PC-9 (cell line): ENCODE measurements at regions of chr2 and their contacts with region 1.

Region 1: GRCh38 chr2:235106874-235107639 is 155.2 kb downstream of the SH3BP4 start:
- DNase-seq: peak; percentile 72 to 78
- H3K4me3 ChIP-seq: no peak overlapping the region
- H3K27ac ChIP-seq: no peak overlapping the region
- H3K4me1 ChIP-seq: peaks cover 9% of the 10 kb centered on the region; the same call in 1 of the 2 replicates
- H3K27me3 ChIP-seq: no peaks in the 10 kb centered on the region
- CTCF ChIP-seq: peak; percentile 91

Region 2: DNA sequence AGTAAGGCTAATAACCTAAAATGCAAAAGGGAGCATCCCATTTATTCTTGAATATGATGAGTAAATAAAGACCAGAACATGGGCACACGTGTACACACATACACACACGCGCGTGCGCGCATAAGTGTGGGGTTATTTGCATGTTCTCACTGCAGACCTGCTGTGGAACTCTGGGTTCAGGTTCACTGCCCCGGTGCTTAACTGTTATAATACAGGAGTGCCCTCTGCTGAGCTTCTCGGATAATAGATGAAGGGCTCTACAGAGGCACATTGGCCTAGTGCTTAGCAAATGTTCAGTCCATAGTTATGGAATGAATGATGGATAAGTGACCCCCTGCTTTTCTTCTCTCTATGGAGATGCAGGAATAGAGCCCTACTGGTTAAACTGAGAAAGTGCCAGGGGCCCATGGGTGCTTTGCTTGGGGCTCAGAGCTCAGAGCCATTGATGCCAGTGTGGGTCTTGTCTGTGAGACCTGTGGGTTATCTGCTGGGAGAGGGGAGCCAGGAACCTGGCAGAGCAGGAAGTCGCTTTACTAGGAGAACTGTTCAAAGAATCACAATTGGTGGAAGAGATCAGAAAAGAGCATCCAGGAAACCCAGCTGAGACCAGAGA is 606.6 kb before region 1 on chr2:
- CTCF ChIA-PET with region 1: interaction called, 6 read pairs
- POLR2A ChIA-PET with region 1: no interaction called
- intact Hi-C with region 1: loop called (anchors 2 kb)
- DNase-seq: peak; percentile 46 to 57
- H3K4me3 ChIP-seq: no peak overlapping the region
- H3K27ac ChIP-seq: no peak overlapping the region
- H3K4me1 ChIP-seq: peaks cover 17% of the 10 kb centered on the region
- H3K27me3 ChIP-seq: no peaks in the 10 kb centered on the region
- CTCF ChIP-seq: peak; percentile 70

Region 3: GRCh38 chr2:234555720-234556119 is 551.3 kb before region 1 on chr2:
- CTCF ChIA-PET with region 1: interaction called, 17 read pairs
- POLR2A ChIA-PET with region 1: no interaction called
- intact Hi-C with region 1: loop called (anchors 1 kb)
- DNase-seq: no peak
- H3K4me3 ChIP-seq: no peak overlapping the region
- H3K27ac ChIP-seq: no peak overlapping the region
- H3K4me1 ChIP-seq: peaks cover 29% of the 10 kb centered on the region
- H3K27me3 ChIP-seq: no peaks in the 10 kb centered on the region
- CTCF ChIP-seq: no peak

Region 4: GRCh38 chr2:234715671-234716250 is 391.3 kb before region 1 on chr2:
- CTCF ChIA-PET with region 1: interaction called, 19 read pairs
- POLR2A ChIA-PET with region 1: interaction called, 4 read pairs
- intact Hi-C with region 1: no loop called
- DNase-seq: no peak
- H3K4me3 ChIP-seq: no peak overlapping the region
- H3K27ac ChIP-seq: no peak overlapping the region
- H3K4me1 ChIP-seq: no peaks in the 10 kb centered on the region
- H3K27me3 ChIP-seq: no peaks in the 10 kb centered on the region
- CTCF ChIP-seq: no peak

Region 5: DNA sequence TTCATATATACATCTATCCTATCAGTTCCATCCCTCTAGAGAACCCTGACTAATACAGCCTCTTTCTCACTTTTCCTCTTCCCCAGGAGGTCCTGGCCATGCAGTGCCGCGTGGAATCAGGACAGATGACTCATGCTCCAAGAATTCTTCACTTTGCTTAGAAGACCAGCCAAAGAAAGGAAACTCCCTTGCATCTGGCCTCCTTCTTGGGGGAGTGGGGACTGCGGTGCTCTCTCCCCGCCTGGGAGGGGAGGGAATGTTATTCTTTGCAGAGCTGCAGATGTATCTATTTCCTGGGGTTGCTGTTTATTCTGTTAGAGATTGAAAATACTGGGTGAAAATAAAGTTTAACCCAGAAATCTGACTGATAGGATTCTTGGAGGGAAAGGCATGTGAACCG is 266.7 kb before region 1 on chr2:
- CTCF ChIA-PET with region 1: no interaction called
- POLR2A ChIA-PET with region 1: no interaction called
- intact Hi-C with region 1: loop called (anchors 1 kb)
- DNase-seq: peak; percentile 86 to 92
- H3K4me3 ChIP-seq: no peak overlapping the region
- H3K27ac ChIP-seq: peak overlapping the region; percentile 63
- H3K4me1 ChIP-seq: peaks cover 38% of the 10 kb centered on the region
- H3K27me3 ChIP-seq: no peaks in the 10 kb centered on the region
- CTCF ChIP-seq: no peak

Region 6: GRCh38 chr2:234951664-234952269 is 155.3 kb before region 1 on chr2 and contains the start of gene SH3BP4:
- CTCF ChIA-PET with region 1: interaction called, 4 read pairs
- POLR2A ChIA-PET with region 1: interaction called, 15 read pairs
- intact Hi-C with region 1: loop called (anchors 2 kb)
- DNase-seq: peak; percentile 54 to 91
- H3K4me3 ChIP-seq: peak within 1 kb of the TSS; percentile 97
- H3K27ac ChIP-seq: peak within 1 kb of the TSS; percentile 53
- H3K4me1 ChIP-seq: peaks cover 38% of the 10 kb centered on the region
- H3K27me3 ChIP-seq: no peaks in the 10 kb centered on the region
- CTCF ChIP-seq: no peak
- total RNA-seq, gene SH3BP4: 131 and 135 TPM in 2 replicates

Region 7: GRCh38 chr2:235050992-235051351 is 56.1 kb before region 1 on chr2:
- CTCF ChIA-PET with region 1: interaction called, 5 read pairs
- POLR2A ChIA-PET with region 1: no interaction called
- intact Hi-C with region 1: loop called (anchors 2 kb)
- DNase-seq: peak; percentile 89 to 97
- H3K4me3 ChIP-seq: no peak overlapping the region
- H3K27ac ChIP-seq: peak overlapping the region; percentile 74
- H3K4me1 ChIP-seq: peaks cover 57% of the 10 kb centered on the region
- H3K27me3 ChIP-seq: no peaks in the 10 kb centered on the region
- CTCF ChIP-seq: no peak; the same call in 1 of the 2 replicates

Region 8: DNA sequence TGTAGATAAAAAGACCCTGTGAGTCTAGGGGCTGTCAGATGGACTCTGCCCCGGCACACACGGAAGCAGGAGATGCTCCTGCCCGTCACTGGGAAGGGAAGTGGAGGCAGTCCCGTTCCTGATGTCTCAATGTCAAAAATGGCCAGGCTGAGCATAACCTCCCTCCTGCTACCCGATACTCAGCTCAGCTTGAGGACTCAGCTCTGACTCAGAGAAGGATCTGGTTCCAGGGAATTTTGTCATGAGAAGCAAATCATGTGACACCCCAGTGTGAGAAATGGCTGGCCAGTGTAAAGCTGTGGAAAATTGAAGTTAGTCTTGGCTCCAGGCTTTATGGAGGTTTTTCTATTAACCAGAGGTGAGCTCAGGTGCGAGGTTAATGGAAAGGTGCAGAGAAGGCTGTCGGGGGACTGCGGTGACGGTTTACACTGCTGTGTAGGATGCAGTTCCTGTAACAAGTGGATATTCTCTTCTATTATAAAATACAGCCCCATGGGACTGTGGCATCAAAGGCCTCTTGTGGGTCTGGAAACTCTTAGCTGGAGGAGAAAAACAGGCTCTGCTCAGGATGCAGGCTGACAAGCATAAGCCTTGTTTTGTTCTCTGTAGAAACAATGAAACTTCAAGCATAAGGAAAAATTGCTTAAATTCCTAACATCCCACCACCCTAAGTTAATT is 362.1 kb after region 1 on chr2:
- CTCF ChIA-PET with region 1: no interaction called
- POLR2A ChIA-PET with region 1: no interaction called
- intact Hi-C with region 1: no loop called
- DNase-seq: peak; percentile 63 to 93
- H3K4me3 ChIP-seq: peak overlapping the region; percentile 22; the same call in 1 of the 2 replicates
- H3K27ac ChIP-seq: peak overlapping the region; percentile 87
- H3K4me1 ChIP-seq: peaks cover 29% of the 10 kb centered on the region
- H3K27me3 ChIP-seq: no peaks in the 10 kb centered on the region
- CTCF ChIP-seq: no peak

Region 9: GRCh38 chr2:235521844-235522243 is 414.8 kb after region 1 on chr2:
- CTCF ChIA-PET with region 1: no interaction called
- POLR2A ChIA-PET with region 1: no interaction called
- intact Hi-C with region 1: no loop called
- DNase-seq: no peak
- H3K4me3 ChIP-seq: no peak overlapping the region
- H3K27ac ChIP-seq: no peak overlapping the region
- H3K4me1 ChIP-seq: 0 out of 2 replicates have a peak, but pooled peaks cover 8% of the 10 kb centered on the region
- H3K27me3 ChIP-seq: no peaks in the 10 kb centered on the region
- CTCF ChIP-seq: no peak